GM13976 (cell line): ENCODE measurements at regions of chr9 and their contacts with region 1.

Region 1: DNA sequence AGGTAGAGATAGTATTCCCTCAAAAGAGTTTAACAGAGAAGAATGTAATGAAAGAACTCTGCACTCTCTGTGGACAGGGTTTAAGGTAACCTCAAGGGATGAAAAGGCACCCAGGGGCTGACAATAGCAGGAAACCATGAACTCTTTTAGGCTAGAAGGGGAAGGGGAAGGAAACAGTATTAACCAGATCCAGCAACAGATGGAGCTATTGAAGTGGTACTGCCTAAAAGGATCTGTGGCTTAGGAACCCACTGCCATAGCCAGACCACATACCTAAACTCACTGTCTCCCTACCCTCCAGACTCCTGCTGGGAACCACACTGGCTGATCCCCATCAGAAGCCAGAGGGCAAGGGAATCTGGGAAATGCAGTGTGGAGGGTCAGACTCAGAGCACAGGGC is 35.5 kb downstream of the PLGRKT start:
- DNase-seq: no peak
- CTCF ChIP-seq: no peak

Region 2: DNA sequence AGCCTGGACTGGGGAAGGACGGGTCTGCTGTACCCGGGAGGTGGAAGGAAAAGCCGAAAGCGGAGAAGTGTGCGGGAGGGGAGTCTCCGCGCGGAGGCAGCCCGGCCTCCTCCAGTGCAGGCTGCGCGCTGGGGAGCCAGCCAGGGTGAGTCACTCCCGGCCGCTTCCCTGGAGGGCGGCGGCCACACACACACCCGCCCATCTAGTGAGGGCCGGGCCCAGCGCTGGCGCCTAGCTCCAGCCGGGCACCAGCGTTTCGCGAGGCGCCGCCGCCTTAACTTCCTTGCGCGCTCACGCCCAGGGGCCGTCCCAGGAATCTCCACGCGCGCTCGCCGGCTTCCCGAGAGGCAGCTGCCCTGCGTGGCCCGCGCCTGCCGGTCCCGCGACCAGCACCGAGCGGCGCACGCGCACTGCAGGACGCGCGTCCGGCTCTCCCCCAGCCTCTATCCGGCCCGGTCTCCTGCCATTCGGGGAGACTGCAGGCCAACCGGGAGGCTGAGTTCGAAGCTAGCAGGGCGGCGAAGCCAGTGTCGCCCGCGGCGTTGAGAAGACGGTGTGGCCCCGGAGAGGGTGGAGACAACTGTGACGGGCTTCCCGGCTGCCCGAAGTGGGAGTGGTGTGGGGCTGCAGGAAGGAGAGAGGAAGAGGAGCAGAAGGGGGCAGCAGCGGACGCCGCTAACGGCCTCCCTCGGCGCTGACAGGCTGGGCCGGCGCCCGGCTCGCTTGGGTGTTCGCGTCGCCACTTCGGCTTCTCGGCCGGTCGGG is 417.4 kb before region 1 on chr9 and contains the start of gene JAK2:
- in situ Hi-C with region 1: no loop called
- DNase-seq: peak; percentile 82
- CTCF ChIP-seq: peak; percentile 57

Region 3: GRCh38 chr9:5186416-5187169 is 215.6 kb before region 1 on chr9:
- in situ Hi-C with region 1: loop called (anchors 25 kb)
- DNase-seq: peak; percentile 66
- CTCF ChIP-seq: peak; percentile 40